CD4-positive, alpha-beta T cell (primary cell): ENCODE measurements at regions of chr18 and their contacts with region 1.

Region 1: DNA sequence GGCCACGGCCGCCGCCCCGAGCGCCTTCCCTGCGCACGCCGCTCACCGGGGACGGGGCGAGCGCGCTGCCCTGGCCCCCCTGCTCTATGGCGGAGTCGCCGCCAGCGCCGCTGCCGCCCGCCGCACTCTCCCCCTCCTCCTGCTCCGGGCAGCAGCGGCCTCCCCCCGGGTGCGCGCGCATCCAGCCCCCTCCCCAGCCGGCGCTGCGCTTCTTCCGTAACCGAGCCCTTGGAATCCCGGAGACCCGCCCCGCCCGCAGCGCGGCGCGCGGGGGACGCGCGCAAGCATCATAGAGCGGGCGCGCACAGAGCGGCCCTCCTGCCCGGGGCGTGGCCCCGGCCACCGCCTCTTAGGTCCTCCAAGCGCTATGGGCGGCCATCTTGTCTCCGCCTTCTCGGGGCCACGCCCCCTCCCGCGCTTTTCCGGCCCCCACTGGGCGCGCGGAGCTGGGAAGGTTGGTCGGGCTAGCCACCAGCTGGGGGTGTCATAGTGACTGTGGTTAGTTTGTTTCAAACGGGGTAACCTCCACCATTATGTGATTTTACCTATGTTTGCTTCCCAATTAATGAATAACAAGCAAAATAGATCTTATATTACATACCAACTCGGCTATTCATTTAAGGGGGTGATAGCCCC is at the start of gene MBD2:
- DNase-seq: peak; percentile 82 to 97 (median 90)
- ATAC-seq: peak; percentile 83
- H3K4me3 ChIP-seq: peak within 1 kb of the TSS; percentile 57
- H3K4me3 Mint-ChIP-seq: peak within 1 kb of the TSS; percentile 99
- H3K27ac ChIP-seq: peak within 1 kb of the TSS; percentile 55 to 76
- H3K27ac Mint-ChIP-seq: peak within 1 kb of the TSS; percentile 96
- H3K4me1 ChIP-seq: peaks cover 33% of the 10 kb centered on the region
- H3K4me1 Mint-ChIP-seq: peaks cover 44% of the 10 kb centered on the region
- H3K27me3 ChIP-seq: no peaks in the 10 kb centered on the region
- H3K27me3 Mint-ChIP-seq: no peaks in the 10 kb centered on the region
- CTCF ChIP-seq: no peak
- total RNA-seq, gene MBD2: 70.9 to 73.3 TPM

Region 2: DNA sequence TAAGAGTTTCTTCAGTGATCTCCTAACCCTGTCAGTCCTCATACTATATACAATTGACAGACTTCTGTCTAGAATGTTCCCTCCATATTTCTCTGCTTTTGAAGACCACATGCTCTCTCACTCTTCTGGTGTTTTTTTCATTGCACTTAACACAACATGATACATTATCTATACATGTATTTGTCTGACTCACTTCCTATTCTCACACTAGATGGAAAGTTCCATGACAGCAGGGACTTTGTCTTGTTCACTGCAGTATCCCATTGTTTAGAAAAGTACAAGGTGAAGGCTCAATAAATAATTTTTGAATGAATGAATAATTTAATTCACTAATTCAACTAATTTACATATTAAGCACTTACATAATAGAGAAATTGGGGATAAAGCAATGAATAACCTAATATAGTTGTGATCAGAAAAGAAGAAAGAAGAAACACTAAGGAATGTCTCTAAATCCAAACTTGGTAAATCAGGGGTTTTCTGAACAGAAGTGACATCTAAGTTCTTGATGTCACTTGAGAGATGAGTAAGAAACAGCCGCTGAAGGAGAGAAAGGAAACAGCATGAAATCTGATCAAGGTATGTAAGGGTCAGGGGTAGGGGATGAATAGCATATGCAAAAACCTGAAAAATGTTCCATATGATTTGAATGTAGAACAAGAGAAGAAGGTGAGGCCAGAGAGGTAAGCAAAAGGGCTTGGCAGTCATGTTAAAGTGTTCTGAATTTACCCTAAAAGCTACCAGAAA is 42.5 kb before region 1 on chr18:
- CTCF ChIA-PET with region 1: no interaction called
- POLR2A ChIA-PET with region 1: no interaction called
- intact Hi-C with region 1: no loop called
- DNase-seq: no peak
- ATAC-seq: no peak
- H3K4me3 ChIP-seq: no peak overlapping the region
- H3K4me3 Mint-ChIP-seq: no peak overlapping the region
- H3K27ac ChIP-seq: no peak overlapping the region
- H3K27ac Mint-ChIP-seq: no peak overlapping the region
- H3K4me1 ChIP-seq: no peaks in the 10 kb centered on the region
- H3K4me1 Mint-ChIP-seq: peaks cover 2% of the 10 kb centered on the region
- H3K27me3 ChIP-seq: no peaks in the 10 kb centered on the region
- H3K27me3 Mint-ChIP-seq: no peaks in the 10 kb centered on the region
- CTCF ChIP-seq: no peak

Region 3: DNA sequence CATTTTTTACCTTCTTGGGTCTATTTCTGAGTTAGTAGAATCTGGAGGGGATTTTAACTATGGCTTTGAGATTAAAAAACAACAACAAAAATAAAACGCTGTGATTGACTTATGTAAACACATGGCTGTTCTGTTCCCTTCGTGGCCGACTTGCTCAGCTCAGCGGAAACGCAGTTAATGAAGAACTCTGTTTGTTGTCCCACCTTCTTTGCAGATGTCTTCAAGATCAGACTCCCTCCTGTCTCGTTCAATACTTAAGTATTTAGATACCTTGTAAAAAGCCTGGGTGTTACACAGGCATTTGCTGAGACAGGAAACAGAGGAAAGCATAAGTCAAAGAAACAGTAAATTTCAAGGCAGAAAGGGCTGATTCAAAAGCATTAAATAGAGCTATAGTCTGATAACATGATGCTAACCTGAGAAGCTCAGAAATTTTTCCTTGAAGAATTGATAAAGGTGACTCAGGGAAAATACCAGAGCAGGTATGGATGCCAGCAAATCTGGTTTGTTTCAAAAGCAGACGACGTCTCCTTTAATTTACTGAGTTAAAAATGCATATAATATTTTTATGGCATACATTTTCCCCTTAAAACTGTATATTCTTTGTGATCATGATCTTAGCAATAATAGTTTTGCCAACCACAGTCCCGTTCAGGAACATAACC is 23.1 kb after region 1 on chr18:
- CTCF ChIA-PET with region 1: no interaction called
- POLR2A ChIA-PET with region 1: interaction called, 14 read pairs
- intact Hi-C with region 1: no loop called
- DNase-seq: peak in 2 of 14 experiments; percentile 14 to 17
- ATAC-seq: peak; percentile 35
- H3K4me3 ChIP-seq: no peak overlapping the region
- H3K4me3 Mint-ChIP-seq: peak overlapping the region; percentile 52
- H3K27ac ChIP-seq: peak overlapping the region; percentile 15 to 73
- H3K27ac Mint-ChIP-seq: peak overlapping the region; percentile 85
- H3K4me1 ChIP-seq: peaks cover 8% of the 10 kb centered on the region
- H3K4me1 Mint-ChIP-seq: peaks cover 28% of the 10 kb centered on the region
- H3K27me3 ChIP-seq: no peaks in the 10 kb centered on the region
- H3K27me3 Mint-ChIP-seq: no peaks in the 10 kb centered on the region
- CTCF ChIP-seq: no peak

Region 4: GRCh38 chr18:54357660-54358494 is 133.4 kb after region 1 on chr18 and contains the starts of genes C18orf54 and STARD6:
- CTCF ChIA-PET with region 1: interaction called, 17 read pairs
- POLR2A ChIA-PET with region 1: interaction called, 15 read pairs
- intact Hi-C with region 1: loop called (anchors 1 to 2 kb)
- DNase-seq: peak; percentile 77 to 97 (median 88)
- ATAC-seq: peak; percentile 93
- H3K4me3 ChIP-seq: peak within 1 kb of the TSS; percentile 81
- H3K4me3 Mint-ChIP-seq: peak within 1 kb of the TSS; percentile 98
- H3K27ac ChIP-seq: peak within 1 kb of the TSS in 1 of 2 donors; percentile 65
- H3K27ac Mint-ChIP-seq: peak within 1 kb of the TSS; percentile 83
- H3K4me1 ChIP-seq: peaks cover 13% of the 10 kb centered on the region
- H3K4me1 Mint-ChIP-seq: peaks cover 23% of the 10 kb centered on the region
- H3K27me3 ChIP-seq: no peaks in the 10 kb centered on the region
- H3K27me3 Mint-ChIP-seq: no peaks in the 10 kb centered on the region
- CTCF ChIP-seq: peak; percentile 63
- total RNA-seq, gene C18orf54: 0.44 to 0.47 TPM
- total RNA-seq, gene STARD6: not detected

Region 5: GRCh38 chr18:54392543-54393023 is 168.1 kb after region 1 on chr18:
- CTCF ChIA-PET with region 1: interaction called, 4 read pairs
- POLR2A ChIA-PET with region 1: no interaction called
- intact Hi-C with region 1: loop called in 1 of 2 experiments (anchors 5 kb)
- DNase-seq: peak in 3 of 14 experiments; percentile 54 to 74 (median 71)
- ATAC-seq: peak; percentile 69
- H3K4me3 ChIP-seq: no peak overlapping the region
- H3K4me3 Mint-ChIP-seq: no peak overlapping the region
- H3K27ac ChIP-seq: no peak overlapping the region
- H3K27ac Mint-ChIP-seq: no peak overlapping the region
- H3K4me1 ChIP-seq: no peaks in the 10 kb centered on the region
- H3K4me1 Mint-ChIP-seq: no peaks in the 10 kb centered on the region
- H3K27me3 ChIP-seq: no peaks in the 10 kb centered on the region
- H3K27me3 Mint-ChIP-seq: peaks cover 16% of the 10 kb centered on the region
- CTCF ChIP-seq: peak; percentile 80